ENCODE measurements at regions of chr14 and their contacts with region 1.

Region 1: GRCh38 chr14:77104393-77104792 is 6.3 kb downstream of the CIPC start:
- DNase-seq: no peak
- H3K4me3 ChIP-seq: no peak overlapping the region
- H3K27ac ChIP-seq: no peak overlapping the region
- H3K4me1 ChIP-seq: peaks cover 5% of the 10 kb centered on the region
- H3K27me3 ChIP-seq: no peaks in the 10 kb centered on the region
- CTCF ChIP-seq: no peak

Region 2: DNA sequence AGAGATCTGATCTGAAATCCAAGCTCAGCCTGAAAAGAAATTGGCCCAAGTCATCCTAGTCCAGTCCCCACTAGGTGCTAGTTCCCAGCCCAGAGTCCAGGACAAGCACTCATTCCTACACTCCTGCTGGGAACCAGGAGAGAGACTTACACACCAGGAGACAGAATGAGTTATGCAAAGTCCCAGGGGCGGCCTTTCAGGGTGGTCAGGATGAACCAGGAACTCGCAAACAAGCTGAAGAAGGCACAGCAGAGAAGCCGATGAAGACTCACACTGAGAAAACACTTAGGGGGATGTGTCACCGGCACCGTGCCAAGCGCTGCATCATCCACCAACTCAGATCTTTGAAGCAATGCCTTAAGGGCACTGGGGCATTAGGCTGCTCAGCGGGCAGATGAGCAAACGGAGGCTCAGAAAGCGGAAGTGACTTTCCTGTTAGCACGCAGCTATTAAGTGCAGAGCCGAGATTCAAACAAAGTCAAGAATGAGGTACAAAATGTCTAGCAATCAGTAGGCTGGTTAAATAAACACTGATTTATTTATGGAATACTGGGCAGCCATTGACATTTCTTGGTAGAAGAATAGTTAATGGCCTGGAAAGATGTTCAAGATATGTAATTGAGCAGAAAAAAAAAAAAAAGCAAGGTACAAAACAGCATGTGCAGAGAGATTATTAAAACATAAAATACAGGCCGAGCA is 199.5 kb before region 1 on chr14:
- CTCF ChIA-PET with region 1: no interaction called
- POLR2A ChIA-PET with region 1: interaction called, 15 read pairs
- intact Hi-C with region 1: no loop called
- DNase-seq: peak; percentile 98 to 100
- H3K4me3 ChIP-seq: peak overlapping the region; percentile 9; the same call in 1 of the 2 replicates
- H3K27ac ChIP-seq: peak overlapping the region; percentile 80
- H3K4me1 ChIP-seq: peaks cover 34% of the 10 kb centered on the region
- H3K27me3 ChIP-seq: no peaks in the 10 kb centered on the region
- CTCF ChIP-seq: no peak

Measured in PC-9 (cell line).